ENCODE measurements at regions of chr11 and their contacts with region 1.

Region 1: DNA sequence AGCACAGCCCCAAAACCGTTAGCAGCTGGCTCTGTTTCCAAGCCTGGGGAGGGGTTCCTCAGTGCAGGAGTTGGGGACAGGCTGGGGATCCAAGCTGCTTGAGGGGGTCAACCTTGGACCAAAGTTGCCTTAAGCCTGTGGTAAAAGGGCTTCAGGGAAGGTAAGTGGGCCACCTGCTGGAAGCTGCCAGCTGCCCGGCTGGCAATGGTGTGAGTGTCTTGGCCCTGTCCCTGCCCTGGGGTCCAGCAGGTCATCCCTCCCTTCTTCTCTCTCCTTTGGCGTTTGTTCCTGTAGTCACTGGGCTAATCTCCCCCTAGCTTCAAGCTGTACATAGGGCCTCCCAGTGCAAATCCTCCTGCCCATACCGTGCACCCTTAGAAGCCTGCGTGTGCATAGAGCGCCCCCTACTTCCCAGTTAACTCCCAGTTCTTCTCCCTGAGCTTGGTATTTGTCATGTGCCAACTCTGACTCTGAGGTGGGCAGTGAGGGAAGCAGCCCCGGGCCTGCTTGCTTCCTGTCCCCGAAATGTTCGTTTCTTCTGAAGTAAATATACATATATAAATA is 4.4 kb downstream of the TMEM258 start:
- DNase-seq: no peak
- H3K4me3 ChIP-seq: no peak overlapping the region
- H3K27ac ChIP-seq: no peak overlapping the region
- H3K4me1 ChIP-seq: peaks cover under 1 to 10% of the 10 kb centered on the region in 2 donors
- H3K27me3 ChIP-seq: no peaks in the 10 kb centered on the region
- CTCF ChIP-seq: peak in 3 of 6 experiments; percentile 14 to 26 (median 23)
- POLR2A ChIP-seq: no peak

Region 2: GRCh38 chr11:61718621-61719302 is 69.2 kb before region 1 on chr11:
- intact Hi-C with region 1: no loop called
- DNase-seq: peak in 2 of 7 donors; percentile 32 to 65
- H3K4me3 ChIP-seq: peak overlapping the region in 1 of 4 donors; percentile 36
- H3K27ac ChIP-seq: peak overlapping the region in 1 of 5 donors; percentile 52
- H3K4me1 ChIP-seq: peaks cover 0 to 7% of the 10 kb centered on the region in 2 donors
- H3K27me3 ChIP-seq: no peaks in the 10 kb centered on the region
- CTCF ChIP-seq: no peak
- POLR2A ChIP-seq: no peak

Region 3: GRCh38 chr11:61947486-61948210 is 159.6 kb after region 1 on chr11:
- intact Hi-C with region 1: loop called in 1 of 2 experiments (anchors 10 kb)
- DNase-seq: peak; percentile 85 to 97 (median 92)
- H3K4me3 ChIP-seq: no peak overlapping the region
- H3K27ac ChIP-seq: peak overlapping the region in 1 of 5 donors; percentile 23
- H3K4me1 ChIP-seq: peaks cover 0 to 6% of the 10 kb centered on the region in 2 donors
- H3K27me3 ChIP-seq: no peaks in the 10 kb centered on the region
- CTCF ChIP-seq: peak; percentile 84 to 97 (median 96)
- POLR2A ChIP-seq: peak in 1 of 2 donors; percentile 15

Region 4: DNA sequence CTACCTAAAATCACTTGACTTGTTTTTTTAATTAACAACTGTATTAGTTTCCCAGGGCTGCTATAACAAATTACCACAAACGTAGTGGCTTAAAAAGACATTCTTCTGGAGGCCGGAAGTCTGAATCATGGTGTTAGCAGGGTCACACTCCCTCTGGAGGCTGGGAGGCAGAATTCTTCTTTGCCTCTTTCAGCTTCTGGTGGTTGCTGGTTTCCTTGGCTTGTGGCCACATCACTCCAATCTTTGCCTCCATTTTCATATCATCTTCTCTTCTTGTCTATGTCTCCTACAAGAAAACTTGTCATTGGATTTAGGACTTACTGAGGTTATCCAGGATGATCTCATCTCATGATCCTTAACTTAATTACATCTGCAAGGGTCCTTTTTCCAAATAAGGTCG is 328.4 kb after region 1 on chr11:
- intact Hi-C with region 1: loop called in 1 of 2 experiments (anchors 10 kb)
- DNase-seq: peak in 1 of 7 donors; percentile 43
- H3K4me3 ChIP-seq: no peak overlapping the region
- H3K27ac ChIP-seq: no peak overlapping the region
- H3K4me1 ChIP-seq: peaks cover 0 to 8% of the 10 kb centered on the region in 2 donors
- H3K27me3 ChIP-seq: no peaks in the 10 kb centered on the region
- CTCF ChIP-seq: no peak
- POLR2A ChIP-seq: no peak

Region 5: DNA sequence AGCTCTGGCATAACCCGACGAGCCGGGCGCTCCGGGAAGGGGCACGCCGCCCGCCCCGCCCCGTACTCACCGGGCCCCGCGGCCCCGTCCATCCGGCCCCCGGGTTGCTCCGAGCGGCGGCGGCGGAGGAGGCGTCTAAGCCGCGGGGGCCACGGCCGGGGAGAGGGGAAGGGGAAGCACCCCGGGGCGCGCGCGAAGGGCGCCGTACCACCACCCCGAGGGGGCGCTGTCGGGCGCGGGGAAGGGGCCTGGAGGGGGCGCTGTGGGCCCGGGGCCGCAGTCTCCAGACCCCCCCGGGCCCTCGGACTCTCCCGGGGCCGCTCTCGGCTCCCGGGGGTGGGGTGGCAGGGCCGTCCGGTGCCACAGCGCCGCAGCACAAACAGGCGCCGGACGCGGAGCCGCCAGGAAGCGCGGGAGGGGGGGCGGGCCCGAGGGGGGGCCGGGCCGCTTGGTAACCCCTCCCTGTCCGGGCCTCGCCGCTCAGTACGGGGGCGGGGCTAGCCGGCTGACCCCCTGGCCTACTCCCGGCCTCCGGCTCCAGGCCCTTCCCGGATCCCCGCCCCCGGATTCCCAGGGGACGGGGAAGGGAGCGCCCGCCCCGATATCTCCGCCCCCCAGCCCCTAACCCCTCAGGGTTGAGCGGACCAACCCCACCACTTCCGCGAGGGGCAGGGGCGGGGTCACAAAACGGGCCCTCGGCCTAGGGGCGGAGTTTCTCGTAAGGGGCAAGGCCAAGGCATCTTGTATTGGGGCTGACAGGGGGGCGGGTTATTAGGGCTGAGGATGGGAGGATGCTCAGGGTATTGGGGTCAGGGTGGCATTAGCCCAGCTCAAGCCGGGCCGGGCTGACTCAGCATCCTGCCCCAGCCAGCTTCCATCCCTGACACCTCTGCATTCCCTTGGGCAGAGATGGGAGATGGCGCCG is 824.6 kb after region 1 on chr11 and contains the starts of genes EML3 and ROM1:
- intact Hi-C with region 1: no loop called
- DNase-seq: peak; percentile 84 to 95 (median 92)
- H3K4me3 ChIP-seq: peak within 1 kb of the TSS in 3 of 4 donors; percentile 35 to 67 (median 65)
- H3K27ac ChIP-seq: peak within 1 kb of the TSS; percentile 50 to 95 (median 85)
- H3K4me1 ChIP-seq: peaks cover 9 to 19% of the 10 kb centered on the region in 2 donors
- H3K27me3 ChIP-seq: no peaks in the 10 kb centered on the region
- CTCF ChIP-seq: peak; percentile 25 to 91 (median 66)
- POLR2A ChIP-seq: peak in 1 of 2 donors; percentile 21
- total RNA-seq, gene EML3: 13.0 to 97.9 (median 35.4) TPM
- total RNA-seq, gene ROM1: 1.6 to 22.3 (median 4.9) TPM

Measured in adrenal gland (tissue), 19 donors.